ENCODE measurements at regions of chr1 and their contacts with region 1.

Region 1: DNA sequence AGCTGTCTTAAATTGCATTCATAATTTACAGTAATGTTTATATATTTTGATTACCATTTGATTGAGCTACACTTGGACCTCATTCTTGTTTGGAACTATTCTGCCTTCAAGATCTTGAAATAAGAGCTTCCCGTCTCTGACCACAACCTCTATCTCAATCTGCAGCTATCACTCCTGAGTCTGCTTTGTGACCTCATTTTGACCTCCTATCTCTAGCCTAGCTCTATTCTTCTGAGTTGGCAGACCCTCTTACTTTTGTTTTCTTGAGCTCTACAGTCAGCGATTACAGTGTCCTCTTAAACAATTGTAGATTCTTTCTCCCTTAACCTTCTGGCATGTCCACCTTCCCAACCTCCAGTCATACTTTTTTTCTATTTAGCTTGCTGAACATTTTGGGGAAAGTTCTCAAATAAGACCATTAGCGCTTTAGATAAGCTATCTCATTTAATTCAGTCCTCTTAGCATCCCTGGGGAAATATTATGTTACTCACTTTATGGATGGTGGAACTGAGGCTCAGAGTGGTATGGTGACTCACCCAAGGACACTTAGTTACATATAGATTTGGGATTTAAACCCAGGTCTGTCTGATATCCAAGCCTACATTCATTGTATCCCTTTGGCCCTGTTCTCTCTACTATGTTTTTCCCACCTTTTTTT is 19.1 kb downstream of the RPAP2 start:
- DNase-seq: no peak
- H3K4me3 Mint-ChIP-seq: peak overlapping the region; percentile 11
- H3K27ac Mint-ChIP-seq: peak overlapping the region; percentile 72
- H3K4me1 Mint-ChIP-seq: peaks cover 62% of the 10 kb centered on the region
- H3K27me3 Mint-ChIP-seq: no peaks in the 10 kb centered on the region

Region 2: GRCh38 chr1:92230736-92231135 is 87.2 kb before region 1 on chr1:
- CTCF ChIA-PET with region 1: no interaction called
- DNase-seq: no peak
- H3K4me3 Mint-ChIP-seq: no peak overlapping the region
- H3K27ac Mint-ChIP-seq: no peak overlapping the region
- H3K4me1 Mint-ChIP-seq: no peaks in the 10 kb centered on the region
- H3K27me3 Mint-ChIP-seq: peaks cover 4% of the 10 kb centered on the region

Region 3: DNA sequence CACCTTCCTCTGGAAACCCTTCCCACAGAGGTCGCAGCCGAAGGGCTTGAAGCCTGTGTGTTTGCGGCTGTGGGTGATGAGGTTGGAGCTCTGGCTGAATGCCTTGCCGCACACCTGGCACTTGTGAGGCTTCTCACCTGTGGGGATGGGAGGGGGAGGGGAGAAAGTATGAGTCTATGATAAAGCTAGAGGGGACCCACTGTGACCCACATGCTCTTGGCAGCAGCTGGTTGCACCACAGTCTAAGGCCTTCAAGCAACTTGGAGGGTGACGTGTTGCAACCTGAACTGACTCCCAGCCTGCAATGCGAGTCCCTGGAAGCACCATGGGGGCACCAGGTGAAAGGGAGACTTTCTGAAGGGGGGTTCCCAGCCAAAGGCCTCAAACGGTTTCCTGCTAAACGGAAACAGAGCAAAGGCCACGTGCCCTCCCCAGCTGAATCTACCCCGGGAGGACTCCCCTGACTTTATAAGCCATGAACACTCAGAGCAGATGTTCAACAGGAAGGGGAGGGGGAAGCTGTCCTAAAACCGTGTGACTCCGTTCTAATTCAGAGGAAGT is 158.2 kb after region 1 on chr1:
- CTCF ChIA-PET with region 1: interaction called, 20 read pairs
- DNase-seq: peak; percentile 77
- H3K4me3 Mint-ChIP-seq: peak overlapping the region; percentile 12
- H3K27ac Mint-ChIP-seq: peak overlapping the region; percentile 78
- H3K4me1 Mint-ChIP-seq: peaks cover 81% of the 10 kb centered on the region
- H3K27me3 Mint-ChIP-seq: no peaks in the 10 kb centered on the region